Activated CD4-positive, alpha-beta T cell treated with anti-CD3 and anti-CD28 coated beads, Interleukin-2, amount 10 ng/mL, durations not matched to agents 24 days and 14 days (primary cell): ENCODE measurements at regions of chr12 and their contacts with region 1.

Region 1: DNA sequence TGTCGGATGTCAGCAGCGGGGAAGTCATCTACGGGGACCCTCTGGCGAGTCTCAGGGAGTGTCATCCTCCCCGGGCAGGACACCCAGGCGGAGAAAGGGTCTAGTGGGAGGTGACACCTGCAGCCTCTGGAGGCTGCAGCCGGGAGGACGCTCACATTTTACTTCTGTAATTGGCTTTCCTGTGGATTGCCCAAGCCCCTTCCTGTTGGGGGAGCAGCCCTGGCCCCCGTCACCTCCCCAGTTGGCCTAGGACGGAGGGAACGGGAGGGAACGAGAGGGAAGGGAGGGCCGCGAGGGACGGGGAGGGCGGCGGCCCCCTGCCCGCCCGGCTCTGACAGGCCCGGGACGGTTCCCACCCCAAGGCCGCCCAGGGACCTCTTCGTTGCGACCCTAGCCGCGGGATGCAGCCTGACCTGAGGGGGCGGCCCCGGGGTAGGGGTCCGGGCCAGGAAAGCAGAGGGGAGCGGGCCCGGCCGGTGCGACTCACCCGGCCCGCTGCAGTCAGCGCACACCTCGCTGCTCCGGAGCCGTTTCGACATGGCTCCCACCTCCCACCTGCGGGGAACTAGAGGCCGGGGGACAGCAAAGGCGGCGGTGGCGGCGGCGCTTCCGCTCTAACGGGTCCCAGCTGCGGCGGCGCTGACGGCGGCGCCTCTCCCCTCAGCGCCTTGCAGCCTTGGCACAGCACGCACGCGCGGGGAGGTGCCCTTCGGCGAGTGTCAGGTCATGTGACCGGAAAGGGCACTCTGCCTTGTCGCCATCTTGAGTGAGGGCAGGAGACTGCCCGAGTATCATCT is at the start of gene GIT2:
- DNase-seq: peak; percentile 99
- H3K4me3 Mint-ChIP-seq: peak within 1 kb of the TSS; percentile 90
- H3K27ac Mint-ChIP-seq: peak within 1 kb of the TSS; percentile 94
- H3K4me1 Mint-ChIP-seq: peaks cover 48% of the 10 kb centered on the region
- H3K27me3 Mint-ChIP-seq: no peaks in the 10 kb centered on the region
- total RNA-seq, gene GIT2: 87.1 and 88.6 TPM in 2 replicates

Region 2: GRCh38 chr12:109899783-109900751 is 95.8 kb before region 1 on chr12 and contains the start of gene TCHP:
- intact Hi-C with region 1: loop called (anchors 1 kb)
- DNase-seq: peak; percentile 93
- H3K4me3 Mint-ChIP-seq: peak within 1 kb of the TSS; percentile 90
- H3K27ac Mint-ChIP-seq: peak within 1 kb of the TSS; percentile 98
- H3K4me1 Mint-ChIP-seq: peaks cover 17% of the 10 kb centered on the region
- H3K27me3 Mint-ChIP-seq: no peaks in the 10 kb centered on the region
- total RNA-seq, gene TCHP: 30.9 and 34.0 TPM in 2 replicates

Region 3: GRCh38 chr12:109982210-109982609 is 13.7 kb before region 1 on chr12:
- intact Hi-C with region 1: loop called (anchors 1 kb)
- DNase-seq: no peak
- H3K4me3 Mint-ChIP-seq: peak overlapping the region; percentile 59
- H3K27ac Mint-ChIP-seq: peak overlapping the region; percentile 93
- H3K4me1 Mint-ChIP-seq: peaks cover 51% of the 10 kb centered on the region
- H3K27me3 Mint-ChIP-seq: no peaks in the 10 kb centered on the region

Region 4: GRCh38 chr12:110048242-110049027 is 52.6 kb after region 1 on chr12 and contains the start of gene C12orf76:
- intact Hi-C with region 1: loop called (anchors 2 kb)
- DNase-seq: peak; percentile 98
- H3K4me3 Mint-ChIP-seq: peak within 1 kb of the TSS; percentile 87
- H3K27ac Mint-ChIP-seq: peak within 1 kb of the TSS; percentile 96
- H3K4me1 Mint-ChIP-seq: peaks cover 23% of the 10 kb centered on the region
- H3K27me3 Mint-ChIP-seq: no peaks in the 10 kb centered on the region
- total RNA-seq, gene C12orf76: 21.3 and 25.1 TPM in 2 replicates

Region 5: GRCh38 chr12:110079477-110080400 is 83.9 kb after region 1 on chr12:
- intact Hi-C with region 1: loop called (anchors 2 kb)
- DNase-seq: peak; percentile 93
- H3K4me3 Mint-ChIP-seq: peak overlapping the region; percentile 72
- H3K27ac Mint-ChIP-seq: peak overlapping the region; percentile 95
- H3K4me1 Mint-ChIP-seq: peaks cover 35% of the 10 kb centered on the region
- H3K27me3 Mint-ChIP-seq: no peaks in the 10 kb centered on the region

Region 6: DNA sequence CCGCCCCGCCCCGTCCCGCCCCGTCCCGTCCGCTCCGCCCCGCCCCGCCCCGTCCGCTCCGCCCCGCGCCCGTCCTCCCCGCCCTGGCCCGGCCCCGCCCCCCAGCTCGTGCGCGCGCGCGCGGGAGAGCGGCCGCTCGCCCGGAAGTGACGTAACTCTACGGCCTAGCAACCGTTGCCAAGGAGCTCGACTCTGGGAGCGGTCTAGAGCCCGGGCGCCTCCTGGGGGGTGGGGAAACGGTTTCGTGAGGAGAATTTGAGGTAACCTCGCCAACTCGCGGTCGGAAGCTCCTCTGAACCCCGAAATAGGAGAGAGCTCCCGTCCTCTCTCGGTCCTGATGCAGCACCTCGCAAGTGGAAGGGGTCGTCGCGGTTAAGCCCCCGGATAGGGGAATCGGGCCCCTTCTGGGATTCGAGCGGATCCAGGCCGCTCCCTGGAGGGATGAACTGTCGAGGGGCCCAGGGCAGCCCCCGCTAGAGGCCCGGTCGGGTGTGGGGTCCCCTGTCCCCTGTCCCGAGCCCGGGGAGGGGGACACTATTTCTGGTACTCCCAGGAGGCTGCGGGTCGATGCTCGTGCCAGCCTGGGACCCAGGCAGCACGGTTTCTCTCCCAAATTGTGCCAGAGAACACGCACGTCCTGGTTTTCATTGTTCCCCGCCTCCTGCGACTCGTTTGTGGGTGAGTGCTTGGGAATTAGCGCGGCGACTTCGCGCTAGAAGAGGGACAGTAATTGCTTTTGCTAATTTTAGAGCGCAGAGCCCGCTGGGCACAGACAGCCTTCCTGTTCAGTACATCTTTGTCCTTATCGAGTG is 128.5 kb after region 1 on chr12 and contains the start of gene IFT81:
- intact Hi-C with region 1: loop called (anchors 1 kb)
- DNase-seq: peak; percentile 99
- H3K4me3 Mint-ChIP-seq: peak within 1 kb of the TSS; percentile 86
- H3K27ac Mint-ChIP-seq: peak within 1 kb of the TSS; percentile 85
- H3K4me1 Mint-ChIP-seq: peaks cover 9% of the 10 kb centered on the region
- H3K27me3 Mint-ChIP-seq: peaks cover 33% of the 10 kb centered on the region
- total RNA-seq, gene IFT81: 1.5 and 1.6 TPM in 2 replicates

Region 7: DNA sequence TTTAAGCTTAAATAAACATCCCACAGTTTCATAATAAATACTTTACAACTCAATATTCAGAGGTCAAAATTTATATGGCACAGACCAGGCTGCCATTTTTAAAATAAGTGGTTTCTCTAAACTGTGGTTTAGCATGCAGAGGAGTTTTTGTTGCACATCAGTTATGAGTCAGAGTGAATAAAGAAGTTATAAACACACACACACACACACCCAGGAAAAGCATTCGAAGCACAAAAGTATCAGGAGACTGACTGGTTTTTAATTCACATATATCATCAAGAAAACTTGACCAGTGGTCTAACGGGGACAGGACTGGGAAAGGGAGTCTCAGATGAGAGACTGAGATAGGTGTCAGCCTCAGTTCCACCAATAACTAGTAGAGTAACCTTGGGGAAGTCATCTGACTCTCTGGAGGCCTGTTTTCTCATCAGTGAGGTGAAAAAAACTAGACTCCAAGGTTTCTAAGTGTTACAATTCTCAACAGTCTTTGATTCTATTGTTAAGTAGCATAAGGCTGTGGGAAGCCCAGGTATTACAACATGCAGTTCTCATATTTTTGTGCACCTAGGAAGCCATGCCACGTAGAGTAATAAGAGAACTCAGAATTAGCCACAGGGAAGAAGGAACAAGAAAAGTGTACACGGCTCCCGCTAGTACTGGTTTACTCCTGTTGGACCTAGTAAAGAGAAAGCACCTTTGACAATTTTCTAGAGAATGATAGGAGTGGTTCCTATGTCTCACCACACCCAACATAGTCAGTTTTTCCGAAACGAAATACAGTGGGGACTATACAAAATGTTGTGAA is 582.0 kb after region 1 on chr12:
- intact Hi-C with region 1: loop called (anchors 5 kb)
- DNase-seq: peak; percentile 87
- H3K4me3 Mint-ChIP-seq: peak overlapping the region; percentile 98
- H3K27ac Mint-ChIP-seq: peak overlapping the region; percentile 97
- H3K4me1 Mint-ChIP-seq: peaks cover 59% of the 10 kb centered on the region
- H3K27me3 Mint-ChIP-seq: no peaks in the 10 kb centered on the region